Common myeloid progenitor, CD34-positive (primary cell): ENCODE measurements at regions of chr14 and their contacts with region 1.

Region 1: GRCh38 chr14:45242706-45243105 is 10.3 kb downstream of the MIS18BP1 start:
- DNase-seq: peak in 2 of 3 donors; percentile 14 to 29
- H3K4me3 ChIP-seq: no peak overlapping the region
- H3K27ac ChIP-seq: peak overlapping the region in 1 of 2 experiments; percentile 59
- H3K4me1 ChIP-seq: peaks cover 0 to 22% (median 19%) of the 10 kb centered on the region in 4 experiments
- H3K27me3 ChIP-seq: no peaks in the 10 kb centered on the region

Region 2: DNA sequence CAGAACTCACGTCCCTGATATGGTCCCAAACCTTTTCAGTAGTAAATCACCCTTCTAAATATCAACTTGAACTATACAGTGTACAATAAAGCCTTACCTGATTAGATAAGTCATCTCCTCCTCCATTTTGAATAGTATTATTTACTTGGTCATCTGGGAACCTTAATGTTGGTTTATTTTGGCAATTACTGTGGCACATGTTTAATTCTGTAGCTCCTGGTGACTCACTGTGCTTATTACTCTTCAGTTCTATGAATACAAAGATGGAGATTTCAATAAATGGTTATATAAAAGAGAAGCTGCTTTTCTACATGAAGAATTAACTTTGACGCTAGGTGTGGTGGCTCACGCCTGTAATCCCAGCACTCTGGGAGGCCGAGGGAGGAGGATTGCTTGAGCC is 15.1 kb before region 1 on chr14:
- CTCF ChIA-PET with region 1: interaction called, 17 read pairs
- POLR2A ChIA-PET with region 1: no interaction called
- DNase-seq: no peak
- H3K4me3 ChIP-seq: no peak overlapping the region
- H3K27ac ChIP-seq: no peak overlapping the region
- H3K4me1 ChIP-seq: no peaks in the 10 kb centered on the region
- H3K27me3 ChIP-seq: no peaks in the 10 kb centered on the region

Region 3: DNA sequence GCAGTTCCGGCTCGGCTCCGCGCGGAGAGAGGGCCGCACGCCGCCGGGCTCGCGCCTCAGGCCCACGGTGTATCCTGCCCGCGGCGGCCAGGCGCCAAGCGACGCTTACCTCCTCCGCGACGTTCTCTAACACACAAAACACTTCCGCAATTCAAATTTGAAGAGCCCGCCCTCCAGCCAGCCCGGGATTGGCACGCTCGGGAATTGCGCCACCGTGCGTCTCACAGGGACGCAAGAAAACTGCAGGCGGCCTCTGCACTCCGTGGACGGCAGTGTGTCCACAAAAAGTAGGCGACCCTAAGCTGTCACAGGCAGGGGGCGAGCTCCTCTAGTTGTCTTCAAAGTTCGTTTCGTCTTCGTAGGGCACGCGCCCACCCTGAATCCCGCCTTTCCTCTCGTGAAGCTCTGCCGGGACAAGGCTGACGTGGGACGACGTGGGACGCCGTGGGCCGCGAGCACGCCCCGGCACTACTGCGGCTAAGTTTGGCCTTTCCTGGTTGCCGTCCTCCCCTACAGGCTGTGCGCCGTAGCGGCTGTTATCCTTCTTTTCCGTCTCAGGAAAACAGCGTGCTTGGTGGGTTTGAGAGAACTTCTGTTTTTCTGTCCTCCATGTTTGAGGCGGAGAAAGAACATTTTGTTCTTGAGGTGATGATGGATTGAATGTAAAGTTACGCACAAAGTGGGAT is 10.5 kb after region 1 on chr14 and contains the start of gene MIS18BP1:
- CTCF ChIA-PET with region 1: interaction called, 23 read pairs
- POLR2A ChIA-PET with region 1: interaction called, 3 read pairs
- DNase-seq: peak; percentile 98 to 99 (median 99)
- H3K4me3 ChIP-seq: peak within 1 kb of the TSS; percentile 84 to 99 (median 91)
- H3K27ac ChIP-seq: peak within 1 kb of the TSS; percentile 82 to 91
- H3K4me1 ChIP-seq: peaks cover 25 to 38% (median 35%) of the 10 kb centered on the region in 4 experiments
- H3K27me3 ChIP-seq: no peaks in the 10 kb centered on the region